ENCODE measurements at regions of chr17 and their contacts with region 1.

Region 1: GRCh38 chr17:62794431-62794971 is 13.6 kb downstream of the MARCHF10 start:
- DNase-seq: no peak
- H3K4me3 ChIP-seq: no peak overlapping the region
- H3K4me3 Mint-ChIP-seq: no peak overlapping the region
- H3K27ac Mint-ChIP-seq: no peak overlapping the region
- H3K4me1 ChIP-seq: no peaks in the 10 kb centered on the region
- H3K4me1 Mint-ChIP-seq: no peaks in the 10 kb centered on the region
- H3K27me3 ChIP-seq: peaks cover 2% of the 10 kb centered on the region
- H3K27me3 Mint-ChIP-seq: peaks cover 22% of the 10 kb centered on the region
- CTCF ChIP-seq: no peak

Region 2: GRCh38 chr17:61837175-61838051 is 957.1 kb before region 1 on chr17:
- CTCF ChIA-PET with region 1: no interaction called
- POLR2A ChIA-PET with region 1: no interaction called
- intact Hi-C with region 1: no loop called
- DNase-seq: peak; percentile 51 to 59
- H3K4me3 ChIP-seq: no peak overlapping the region
- H3K4me3 Mint-ChIP-seq: no peak overlapping the region
- H3K27ac Mint-ChIP-seq: no peak overlapping the region
- H3K4me1 ChIP-seq: peaks cover 4% of the 10 kb centered on the region; the same call in 1 of the 2 replicates
- H3K4me1 Mint-ChIP-seq: no peaks in the 10 kb centered on the region
- H3K27me3 ChIP-seq: no peaks in the 10 kb centered on the region
- H3K27me3 Mint-ChIP-seq: no peaks in the 10 kb centered on the region
- CTCF ChIP-seq: peak; percentile 88 to 90

Region 3: DNA sequence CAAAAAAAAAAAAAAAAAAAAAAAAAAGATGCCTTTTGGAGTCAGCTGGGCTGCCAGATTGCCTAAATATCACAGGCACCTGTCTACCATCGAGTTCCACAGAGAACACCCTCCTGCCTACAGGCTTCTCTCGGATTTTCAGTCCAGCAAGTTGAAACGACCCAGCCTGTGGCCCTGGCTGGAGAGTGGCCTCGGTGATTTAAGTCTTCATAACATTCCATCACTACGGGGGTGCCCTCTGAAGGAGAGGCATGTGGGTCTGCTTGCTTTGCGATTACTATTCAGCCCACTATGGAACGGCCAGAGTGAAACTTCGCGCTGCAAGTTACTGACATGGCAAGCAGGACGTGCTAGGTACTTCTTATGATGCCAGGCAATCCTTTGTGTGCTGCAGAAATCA is 29.1 kb before region 1 on chr17:
- CTCF ChIA-PET with region 1: no interaction called
- POLR2A ChIA-PET with region 1: no interaction called
- intact Hi-C with region 1: loop called (anchors 2 kb)
- DNase-seq: no peak
- H3K4me3 ChIP-seq: no peak overlapping the region
- H3K4me3 Mint-ChIP-seq: no peak overlapping the region
- H3K27ac Mint-ChIP-seq: no peak overlapping the region
- H3K4me1 ChIP-seq: no peaks in the 10 kb centered on the region
- H3K4me1 Mint-ChIP-seq: no peaks in the 10 kb centered on the region
- H3K27me3 ChIP-seq: no peaks in the 10 kb centered on the region; the same call in 1 of the 2 replicates
- H3K27me3 Mint-ChIP-seq: peaks cover 23% of the 10 kb centered on the region
- CTCF ChIP-seq: no peak

Region 4: GRCh38 chr17:62882878-62883277 is 88.4 kb after region 1 on chr17:
- CTCF ChIA-PET with region 1: no interaction called
- POLR2A ChIA-PET with region 1: no interaction called
- intact Hi-C with region 1: no loop called
- DNase-seq: no peak
- H3K4me3 ChIP-seq: no peak overlapping the region
- H3K4me3 Mint-ChIP-seq: no peak overlapping the region
- H3K27ac Mint-ChIP-seq: no peak overlapping the region
- H3K4me1 ChIP-seq: no peaks in the 10 kb centered on the region
- H3K4me1 Mint-ChIP-seq: no peaks in the 10 kb centered on the region
- H3K27me3 ChIP-seq: no peaks in the 10 kb centered on the region
- H3K27me3 Mint-ChIP-seq: peaks cover 8% of the 10 kb centered on the region
- CTCF ChIP-seq: no peak

Region 5: GRCh38 chr17:62923258-62924150 is 129.0 kb after region 1 on chr17:
- CTCF ChIA-PET with region 1: no interaction called
- POLR2A ChIA-PET with region 1: no interaction called
- intact Hi-C with region 1: no loop called
- DNase-seq: no peak
- H3K4me3 ChIP-seq: no peak overlapping the region
- H3K4me3 Mint-ChIP-seq: no peak overlapping the region
- H3K27ac Mint-ChIP-seq: no peak overlapping the region
- H3K4me1 ChIP-seq: no peaks in the 10 kb centered on the region
- H3K4me1 Mint-ChIP-seq: no peaks in the 10 kb centered on the region
- H3K27me3 ChIP-seq: no peaks in the 10 kb centered on the region; the same call in 1 of the 2 replicates
- H3K27me3 Mint-ChIP-seq: peaks cover 3% of the 10 kb centered on the region
- CTCF ChIP-seq: no peak

Region 6: GRCh38 chr17:62933501-62934385 is 139.2 kb after region 1 on chr17:
- CTCF ChIA-PET with region 1: no interaction called
- POLR2A ChIA-PET with region 1: no interaction called
- intact Hi-C with region 1: no loop called
- DNase-seq: no peak
- H3K4me3 ChIP-seq: no peak overlapping the region
- H3K4me3 Mint-ChIP-seq: no peak overlapping the region
- H3K27ac Mint-ChIP-seq: no peak overlapping the region
- H3K4me1 ChIP-seq: no peaks in the 10 kb centered on the region
- H3K4me1 Mint-ChIP-seq: no peaks in the 10 kb centered on the region
- H3K27me3 ChIP-seq: no peaks in the 10 kb centered on the region
- H3K27me3 Mint-ChIP-seq: peaks cover 23% of the 10 kb centered on the region
- CTCF ChIP-seq: no peak